Heart left ventricle (tissue), 16 donors: ENCODE measurements at regions of chr14 and their contacts with region 1.

Region 1: DNA sequence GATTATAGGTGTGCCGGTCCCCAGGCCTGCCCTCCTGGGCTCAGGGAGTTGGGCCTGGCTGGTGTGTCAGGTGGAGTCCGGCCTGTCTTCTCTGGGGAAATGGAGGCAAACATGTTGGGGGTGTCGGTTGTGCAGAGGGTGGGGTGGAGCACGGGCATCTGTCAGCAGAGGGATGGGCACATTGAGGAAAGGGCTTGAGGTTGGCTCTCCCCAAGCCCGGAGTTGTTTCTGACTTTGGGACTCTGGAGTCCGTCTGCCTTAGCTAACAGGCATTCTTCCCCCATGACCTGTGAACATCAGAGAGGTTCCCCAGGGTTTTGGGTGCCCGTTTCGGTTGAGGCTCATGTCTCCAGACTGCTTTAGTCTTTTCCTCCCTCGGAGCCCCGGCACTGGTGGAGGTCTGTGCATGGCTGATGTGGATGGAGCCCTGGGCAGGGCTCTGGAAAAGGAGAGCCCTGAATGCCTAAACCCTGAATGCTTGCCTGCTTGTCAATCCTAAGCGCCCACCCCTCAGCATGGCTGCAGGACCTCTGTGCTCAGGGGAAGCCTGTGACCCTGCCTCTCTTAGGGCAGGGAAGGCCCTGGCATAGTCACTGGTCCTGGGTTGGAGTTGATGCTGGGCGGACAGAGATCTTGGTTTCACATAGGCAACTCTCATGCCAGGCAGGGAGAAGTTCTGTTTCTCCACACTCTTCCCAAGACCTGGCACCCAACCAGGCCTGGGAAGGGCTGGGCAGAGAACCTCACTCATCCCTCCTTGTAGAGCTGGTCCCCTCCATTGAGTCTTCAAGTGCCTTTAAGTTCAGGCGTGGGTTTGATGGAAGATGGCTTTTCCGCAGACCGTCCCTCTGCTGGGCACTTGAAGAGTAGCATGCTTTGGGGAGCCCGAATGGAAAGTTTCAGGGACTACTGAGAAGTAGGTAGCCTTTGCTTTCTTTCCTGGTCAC is 12.9 kb downstream of the NYNRIN start:
- DNase-seq: peak in 1 of 5 donors; percentile 18
- ATAC-seq: peak in 3 of 4 donors; percentile 11 to 51 (median 33)
- H3K4me3 ChIP-seq: no peak overlapping the region
- H3K27ac ChIP-seq: no peak overlapping the region
- H3K4me1 ChIP-seq: peaks cover 0 to 3% (median 0%) of the 10 kb centered on the region in 12 donors
- H3K27me3 ChIP-seq: no peaks in the 10 kb centered on the region
- CTCF ChIP-seq: peak; percentile 45 to 69 (median 56)
- POLR2A ChIP-seq: no peak

Region 2: GRCh38 chr14:24146978-24147760 is 264.5 kb before region 1 on chr14 and contains the start of gene RNF31:
- intact Hi-C with region 1: no loop called
- DNase-seq: peak; percentile 98 to 99 (median 99)
- ATAC-seq: peak; percentile 93 to 97 (median 95)
- H3K4me3 ChIP-seq: peak within 1 kb of the TSS; percentile 57 to 94 (median 84)
- H3K27ac ChIP-seq: peak within 1 kb of the TSS; percentile 49 to 97 (median 94)
- H3K4me1 ChIP-seq: peaks cover 6 to 51% (median 25%) of the 10 kb centered on the region in 12 donors
- H3K27me3 ChIP-seq: no peaks in the 10 kb centered on the region
- CTCF ChIP-seq: no peak
- POLR2A ChIP-seq: peak in 1 of 2 donors; percentile 56
- total RNA-seq, gene RNF31: 31.6 to 54.2 (median 36.6) TPM

Region 3: GRCh38 chr14:24332268-24332993 is 79.3 kb before region 1 on chr14:
- intact Hi-C with region 1: loop called in 1 of 10 experiments (anchors 5 kb)
- DNase-seq: peak in 4 of 5 donors; percentile 64 to 71 (median 68)
- ATAC-seq: peak; percentile 9 to 60 (median 52)
- H3K4me3 ChIP-seq: peak overlapping the region in 10 of 12 donors; percentile 3 to 93 (median 74)
- H3K27ac ChIP-seq: peak overlapping the region in 2 of 12 donors; percentile 87 to 96
- H3K4me1 ChIP-seq: peaks cover 6 to 95% (median 36%) of the 10 kb centered on the region in 12 donors
- H3K27me3 ChIP-seq: peaks cover 0 to 37% (median 14%) of the 10 kb centered on the region in 9 donors
- CTCF ChIP-seq: peak; percentile 48 to 76 (median 65)
- POLR2A ChIP-seq: no peak

Region 4: GRCh38 chr14:24911324-24912109 is 499.8 kb after region 1 on chr14:
- intact Hi-C with region 1: no loop called
- DNase-seq: no peak
- ATAC-seq: peak; percentile 15 to 64 (median 52)
- H3K4me3 ChIP-seq: peak overlapping the region in 2 of 12 donors; percentile 3 to 4
- H3K27ac ChIP-seq: peak overlapping the region in 3 of 12 donors; percentile 8 to 48 (median 15)
- H3K4me1 ChIP-seq: peaks cover 0 to 66% (median 18%) of the 10 kb centered on the region in 12 donors
- H3K27me3 ChIP-seq: no peaks in the 10 kb centered on the region
- CTCF ChIP-seq: no peak
- POLR2A ChIP-seq: no peak